ENCODE measurements at regions of chr11 and their contacts with region 1.

Region 1: GRCh38 chr11:2151500-2152257 is 9.3 kb downstream of the INS start:
- DNase-seq: peak; percentile 79

Region 2: DNA sequence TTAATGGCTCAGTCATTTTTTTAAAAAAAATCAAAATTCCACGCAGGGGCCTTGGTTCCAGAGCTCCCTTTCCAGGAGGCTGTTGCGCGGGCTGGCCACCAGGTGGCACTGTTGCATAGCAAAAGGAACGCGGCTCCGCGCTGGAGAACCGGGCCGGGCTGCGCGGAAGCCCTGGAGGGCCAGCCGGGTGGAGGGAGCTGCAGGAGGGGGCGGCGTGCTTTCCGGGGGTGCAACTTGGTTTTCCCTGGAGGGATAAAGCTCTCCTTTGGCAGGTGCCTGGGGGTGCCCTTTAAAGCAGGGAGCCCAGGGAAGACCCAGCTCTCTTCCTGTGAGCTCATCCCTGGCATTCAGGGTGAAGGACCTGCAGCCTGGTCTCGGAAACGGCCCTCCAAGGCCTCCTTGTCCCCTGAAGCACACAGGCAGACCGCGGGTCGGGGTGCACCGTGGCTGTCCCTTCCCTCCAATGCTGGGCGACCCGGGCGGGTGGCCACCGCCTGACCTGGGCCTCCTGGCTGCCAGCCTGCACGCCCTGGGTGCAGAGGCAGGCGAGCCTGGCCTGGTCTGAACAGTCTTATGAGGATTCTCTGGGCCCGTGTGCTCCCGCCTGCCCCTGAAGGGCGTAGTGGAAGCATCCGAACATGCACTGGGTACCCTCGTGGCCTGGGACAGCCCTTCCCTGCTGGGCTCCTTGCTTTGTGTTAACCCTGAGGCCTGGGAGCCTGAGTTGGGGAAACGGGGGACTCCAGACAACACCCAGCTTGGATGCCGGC is 498.7 kb before region 1 on chr11:
- CTCF ChIA-PET with region 1: interaction called, 34 read pairs
- POLR2A ChIA-PET with region 1: no interaction called
- DNase-seq: peak; percentile 90

Region 3: DNA sequence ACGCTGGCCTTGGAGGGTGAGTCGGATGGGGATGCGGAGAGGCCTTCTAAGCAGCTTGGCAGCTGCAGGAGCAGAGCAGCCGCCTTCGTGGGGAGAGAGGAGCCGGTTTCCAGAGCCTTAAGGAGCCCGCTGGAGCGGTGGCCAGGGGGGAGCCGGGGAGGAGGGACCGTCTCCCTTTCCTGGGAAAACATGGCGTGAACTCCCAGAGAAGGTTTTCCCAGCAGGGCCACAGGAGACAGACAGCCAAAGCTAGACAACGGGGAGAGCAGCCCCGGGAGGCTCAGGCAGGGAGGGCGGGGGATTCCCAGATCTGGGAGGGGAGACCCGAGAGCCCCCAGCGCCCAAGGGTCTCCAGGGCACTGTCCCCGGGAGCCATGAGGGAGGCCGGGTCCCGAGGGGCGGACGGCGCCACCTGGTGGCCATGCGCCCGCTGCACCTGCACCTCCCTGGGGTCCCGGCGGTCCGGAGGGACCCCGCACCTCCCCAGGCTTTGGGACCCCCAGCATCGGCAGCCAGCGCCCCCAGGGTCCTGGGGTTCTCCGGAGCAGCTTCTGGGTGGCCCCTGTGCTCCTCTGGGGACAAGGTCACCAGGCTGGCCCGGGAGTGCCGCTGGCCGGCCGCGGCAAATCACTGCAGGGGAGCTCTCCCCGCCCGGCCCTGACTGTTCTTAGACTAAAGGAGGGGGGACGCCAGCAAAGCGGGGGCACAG is 319.3 kb before region 1 on chr11:
- CTCF ChIA-PET with region 1: interaction called, 13 read pairs
- POLR2A ChIA-PET with region 1: no interaction called
- DNase-seq: peak; percentile 81

Region 4: GRCh38 chr11:2002807-2003206 is 148.9 kb before region 1 on chr11:
- CTCF ChIA-PET with region 1: interaction called, 13 read pairs
- POLR2A ChIA-PET with region 1: no interaction called
- DNase-seq: no peak

Region 5: GRCh38 chr11:2036863-2037486 is 114.7 kb before region 1 on chr11:
- CTCF ChIA-PET with region 1: interaction called, 120 read pairs
- POLR2A ChIA-PET with region 1: interaction called, 4 read pairs
- DNase-seq: no peak

Region 6: DNA sequence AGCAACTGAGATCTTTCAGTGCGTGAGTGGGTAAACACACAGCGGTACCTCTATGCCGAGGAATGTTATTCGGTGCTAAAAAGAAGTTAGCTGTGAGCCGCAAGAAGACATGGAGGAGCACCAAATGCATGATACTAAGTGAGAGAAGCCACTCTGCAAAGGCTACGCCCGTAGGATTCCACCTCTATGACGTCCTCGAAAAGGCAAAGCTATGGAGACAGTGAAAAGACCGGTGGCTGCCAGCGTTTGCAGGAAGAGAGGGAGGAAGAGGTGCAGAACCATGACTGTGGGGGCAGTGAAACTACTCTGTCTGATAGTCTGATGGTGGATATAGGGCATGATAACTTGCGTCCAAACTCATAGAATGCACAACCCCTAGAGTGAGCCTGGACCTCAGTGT is 41.2 kb before region 1 on chr11:
- CTCF ChIA-PET with region 1: no interaction called
- POLR2A ChIA-PET with region 1: no interaction called
- DNase-seq: no peak

Region 7: DNA sequence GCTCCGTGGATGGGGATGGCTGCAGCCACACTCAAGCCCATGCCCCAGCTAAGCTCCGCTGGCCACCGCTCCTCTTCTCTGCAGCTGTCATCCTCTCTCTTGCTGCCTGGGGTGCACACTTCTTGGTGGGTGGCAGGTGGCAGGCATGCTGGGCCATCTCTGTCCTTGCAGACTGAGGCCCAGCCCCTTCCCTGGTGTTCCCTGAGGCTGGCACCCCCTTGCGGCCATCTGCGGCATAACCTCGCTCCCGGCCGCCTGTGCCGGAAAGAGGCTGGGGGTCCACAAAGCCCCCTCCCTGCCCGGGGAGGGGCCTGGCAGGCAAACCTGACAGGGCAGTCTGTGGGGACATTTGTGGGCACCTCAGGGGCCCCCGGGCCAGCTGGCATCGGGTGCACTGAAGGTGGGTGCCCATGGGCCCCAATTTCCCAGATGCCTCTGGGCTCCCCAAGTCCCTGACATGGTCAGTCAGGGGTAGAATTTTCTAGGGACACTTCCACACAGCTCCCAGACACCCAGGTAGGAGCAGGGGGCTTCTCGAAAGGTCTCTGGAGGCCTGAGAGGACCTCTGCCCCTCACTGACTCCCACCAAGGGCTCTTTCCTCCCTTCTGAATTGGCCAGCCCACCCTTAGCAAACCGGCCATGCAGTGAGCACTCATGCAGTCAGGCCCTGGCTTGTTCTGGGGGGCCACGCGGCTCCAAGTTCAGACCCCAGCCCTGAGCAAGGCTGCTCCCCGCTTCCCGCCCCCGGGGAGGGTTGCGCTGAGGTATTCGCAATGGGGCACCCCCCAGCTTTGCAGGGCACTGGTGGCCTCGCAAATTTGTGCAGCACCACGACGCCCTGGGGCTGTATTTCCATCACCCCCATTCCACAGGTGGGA is 43.4 kb after region 1 on chr11:
- CTCF ChIA-PET with region 1: no interaction called
- POLR2A ChIA-PET with region 1: no interaction called
- DNase-seq: peak; percentile 76

Region 8: GRCh38 chr11:2390725-2391151 is 239.1 kb after region 1 on chr11:
- CTCF ChIA-PET with region 1: no interaction called
- POLR2A ChIA-PET with region 1: no interaction called
- DNase-seq: no peak